Activated CD4-positive, alpha-beta T cell treated with anti-CD3 and anti-CD28 coated beads for 36 hours (primary cell): ENCODE measurements at regions of chr4 and their contacts with region 1.

Region 1: GRCh38 chr4:152640058-152640833 is 39.6 kb downstream of the TMEM154 start:
- DNase-seq: no peak
- ATAC-seq: peak; percentile 37
- H3K4me3 Mint-ChIP-seq: no peak overlapping the region
- H3K27ac Mint-ChIP-seq: no peak overlapping the region
- H3K4me1 Mint-ChIP-seq: peaks cover 31% of the 10 kb centered on the region
- H3K27me3 Mint-ChIP-seq: no peaks in the 10 kb centered on the region

Region 2: GRCh38 chr4:152408514-152409327 is 231.5 kb before region 1 on chr4:
- CTCF ChIA-PET with region 1: interaction called, 17 read pairs
- POLR2A ChIA-PET with region 1: no interaction called
- intact Hi-C with region 1: loop called (anchors 1 to 5 kb)
- DNase-seq: peak; percentile 18
- ATAC-seq: peak; percentile 65
- H3K4me3 Mint-ChIP-seq: no peak overlapping the region
- H3K27ac Mint-ChIP-seq: no peak overlapping the region
- H3K4me1 Mint-ChIP-seq: peaks cover 13% of the 10 kb centered on the region
- H3K27me3 Mint-ChIP-seq: no peaks in the 10 kb centered on the region

Region 3: GRCh38 chr4:152454398-152455011 is 185.7 kb before region 1 on chr4:
- CTCF ChIA-PET with region 1: interaction called, 6 read pairs
- POLR2A ChIA-PET with region 1: no interaction called
- intact Hi-C with region 1: loop called (anchors 1 to 2 kb)
- DNase-seq: no peak
- ATAC-seq: no peak
- H3K4me3 Mint-ChIP-seq: no peak overlapping the region
- H3K27ac Mint-ChIP-seq: no peak overlapping the region
- H3K4me1 Mint-ChIP-seq: peaks cover 34% of the 10 kb centered on the region
- H3K27me3 Mint-ChIP-seq: no peaks in the 10 kb centered on the region

Region 4: DNA sequence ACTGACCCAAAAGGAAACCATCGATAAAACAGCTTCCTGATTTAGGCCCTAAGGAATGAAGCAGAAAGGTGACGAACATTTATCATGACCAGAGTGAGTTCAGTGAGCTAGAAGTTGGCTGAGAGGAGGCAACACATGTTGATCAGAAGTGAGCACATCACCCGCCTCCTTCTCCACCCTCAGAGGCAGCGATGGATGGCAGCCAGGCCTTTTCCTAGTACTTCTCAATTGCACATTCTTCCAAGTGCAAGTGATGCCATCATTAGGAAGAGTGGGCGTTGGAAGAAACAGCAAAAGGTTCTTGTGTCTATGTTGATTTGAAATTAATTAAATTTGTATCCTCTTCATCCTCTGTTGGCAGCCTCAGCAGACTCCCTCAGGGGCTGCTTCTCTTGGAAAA is 12.1 kb before region 1 on chr4:
- CTCF ChIA-PET with region 1: interaction called, 18 read pairs
- POLR2A ChIA-PET with region 1: no interaction called
- intact Hi-C with region 1: no loop called
- DNase-seq: no peak
- ATAC-seq: no peak
- H3K4me3 Mint-ChIP-seq: no peak overlapping the region
- H3K27ac Mint-ChIP-seq: no peak overlapping the region
- H3K4me1 Mint-ChIP-seq: no peaks in the 10 kb centered on the region
- H3K27me3 Mint-ChIP-seq: no peaks in the 10 kb centered on the region